Psoas muscle (tissue), 8 donors: ENCODE measurements at regions of chr1 and their contacts with region 1.

Region 1: GRCh38 chr1:205591522-205592351 is 40.1 kb downstream of the ELK4 start:
- DNase-seq: peak; percentile 84 to 91
- ATAC-seq: peak; percentile 95 to 98 (median 96)
- H3K4me3 ChIP-seq: peak overlapping the region; percentile 53
- H3K27ac ChIP-seq: no peak overlapping the region
- H3K4me1 ChIP-seq: no peaks in the 10 kb centered on the region
- H3K27me3 ChIP-seq: no peaks in the 10 kb centered on the region
- CTCF ChIP-seq: peak; percentile 99

Region 2: DNA sequence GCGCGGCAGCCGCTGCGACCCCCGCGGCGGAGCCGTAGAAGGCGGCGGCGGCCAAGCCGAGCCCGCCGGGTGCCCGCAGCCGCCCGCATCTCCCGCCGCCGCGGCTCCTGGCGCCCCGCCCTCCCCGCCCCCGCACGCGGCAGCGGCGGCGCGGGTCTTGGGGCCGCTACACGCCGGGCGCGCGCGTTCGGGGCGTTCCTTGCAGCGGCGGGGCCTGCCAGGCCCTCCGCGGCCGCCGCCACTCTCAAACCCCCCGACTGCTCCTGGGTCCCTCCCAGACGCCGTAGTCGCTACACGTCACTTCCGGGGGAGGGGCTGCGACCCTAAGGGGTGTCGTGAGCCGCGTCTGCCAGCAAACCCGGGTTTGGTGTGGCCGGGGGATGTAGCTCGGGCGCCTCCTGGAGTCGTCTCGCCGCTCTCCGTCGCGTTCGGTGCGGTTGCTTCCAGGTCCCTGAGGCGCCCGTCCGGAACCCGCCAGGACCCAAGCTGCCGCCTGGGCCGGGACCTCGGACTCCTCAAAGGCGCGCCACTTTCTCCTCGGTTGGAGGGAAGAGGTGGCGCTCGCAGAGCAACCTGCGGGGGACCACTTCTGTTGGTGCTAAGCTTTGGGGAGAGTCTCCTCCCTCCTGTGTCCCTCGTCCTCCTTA is 40.1 kb after region 1 on chr1 and contains the start of gene ELK4:
- intact Hi-C with region 1: loop called (anchors 5 kb)
- DNase-seq: peak; percentile 99
- ATAC-seq: peak; percentile 96 to 98 (median 98)
- H3K4me3 ChIP-seq: peak within 1 kb of the TSS; percentile 80
- H3K27ac ChIP-seq: peak within 1 kb of the TSS; percentile 98
- H3K4me1 ChIP-seq: peaks cover 44% of the 10 kb centered on the region
- H3K27me3 ChIP-seq: no peaks in the 10 kb centered on the region
- CTCF ChIP-seq: peak; percentile 65
- total RNA-seq, gene ELK4: 34.4 to 67.8 (median 43.7) TPM

Region 3: GRCh38 chr1:205658943-205659581 is 67.3 kb after region 1 on chr1:
- intact Hi-C with region 1: loop called (anchors 1 kb)
- DNase-seq: peak; percentile 79 to 90
- ATAC-seq: peak; percentile 77 to 91 (median 85)
- H3K4me3 ChIP-seq: peak overlapping the region; percentile 22
- H3K27ac ChIP-seq: no peak overlapping the region
- H3K4me1 ChIP-seq: no peaks in the 10 kb centered on the region
- H3K27me3 ChIP-seq: no peaks in the 10 kb centered on the region
- CTCF ChIP-seq: peak; percentile 83

Region 4: GRCh38 chr1:205711104-205712020 is 119.6 kb after region 1 on chr1:
- intact Hi-C with region 1: loop called (anchors 2 kb)
- DNase-seq: no peak
- ATAC-seq: peak; percentile 79 to 87 (median 82)
- H3K4me3 ChIP-seq: no peak overlapping the region
- H3K27ac ChIP-seq: peak overlapping the region; percentile 44
- H3K4me1 ChIP-seq: peaks cover 4% of the 10 kb centered on the region
- H3K27me3 ChIP-seq: no peaks in the 10 kb centered on the region
- CTCF ChIP-seq: peak; percentile 87